ENCODE measurements at regions of chr17 and their contacts with region 1.

Region 1: GRCh38 chr17:7383742-7384488 is 3.0 kb downstream of the TNK1 start:
- DNase-seq: peak; percentile 86
- ATAC-seq: peak; percentile 97
- H3K4me3 Mint-ChIP-seq: peak overlapping the region; percentile 76
- H3K27ac Mint-ChIP-seq: peak overlapping the region; percentile 63
- H3K4me1 Mint-ChIP-seq: peaks cover 11% of the 10 kb centered on the region
- H3K27me3 Mint-ChIP-seq: peaks cover 31% of the 10 kb centered on the region

Region 2: DNA sequence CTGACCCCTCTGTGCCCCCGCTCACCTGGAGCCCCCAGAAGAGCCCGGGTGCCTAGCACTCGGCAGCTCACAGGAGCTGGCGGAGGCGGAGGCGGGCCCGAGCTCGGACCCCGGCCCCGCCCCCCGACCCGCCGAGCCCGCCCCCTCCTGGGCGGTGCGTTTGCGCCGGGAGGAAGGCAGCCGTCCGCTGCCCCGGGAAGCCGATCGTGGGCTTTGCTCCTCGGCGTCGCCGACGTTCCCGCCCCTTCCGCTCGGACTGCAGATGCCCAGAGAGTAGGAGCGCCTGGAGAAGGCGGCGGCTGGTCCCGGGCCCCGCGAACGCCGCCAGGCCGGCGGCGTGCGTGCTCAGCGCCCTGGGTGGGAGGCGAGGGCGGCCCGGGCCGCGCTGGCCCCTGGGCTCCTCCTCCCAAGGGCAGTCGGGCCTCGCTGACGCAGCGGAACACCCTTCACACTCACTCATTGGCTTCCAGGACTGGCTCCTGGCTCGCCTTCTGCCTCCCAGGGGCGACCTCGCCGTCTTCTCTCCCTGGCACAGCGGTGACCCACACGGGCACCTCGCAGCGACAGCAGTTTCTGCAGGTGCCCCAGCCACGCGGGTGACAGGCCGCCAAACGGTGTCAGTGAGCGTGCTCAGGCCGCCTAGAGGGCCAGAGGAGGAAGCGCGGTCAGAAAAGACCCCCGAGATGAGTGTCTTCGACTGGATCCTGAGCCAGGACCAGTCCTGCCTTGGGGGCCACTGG is 10.7 kb after region 1 on chr17 and contains the start of gene PLSCR3:
- POLR2A ChIA-PET with region 1: interaction called, 19 read pairs
- DNase-seq: peak; percentile 94
- ATAC-seq: peak; percentile 88
- H3K4me3 Mint-ChIP-seq: peak within 1 kb of the TSS; percentile 95
- H3K27ac Mint-ChIP-seq: peak within 1 kb of the TSS; percentile 89
- H3K4me1 Mint-ChIP-seq: peaks cover 19% of the 10 kb centered on the region
- H3K27me3 Mint-ChIP-seq: no peaks in the 10 kb centered on the region
- total RNA-seq, gene PLSCR3: 79.3 to 82.1 TPM

Region 3: DNA sequence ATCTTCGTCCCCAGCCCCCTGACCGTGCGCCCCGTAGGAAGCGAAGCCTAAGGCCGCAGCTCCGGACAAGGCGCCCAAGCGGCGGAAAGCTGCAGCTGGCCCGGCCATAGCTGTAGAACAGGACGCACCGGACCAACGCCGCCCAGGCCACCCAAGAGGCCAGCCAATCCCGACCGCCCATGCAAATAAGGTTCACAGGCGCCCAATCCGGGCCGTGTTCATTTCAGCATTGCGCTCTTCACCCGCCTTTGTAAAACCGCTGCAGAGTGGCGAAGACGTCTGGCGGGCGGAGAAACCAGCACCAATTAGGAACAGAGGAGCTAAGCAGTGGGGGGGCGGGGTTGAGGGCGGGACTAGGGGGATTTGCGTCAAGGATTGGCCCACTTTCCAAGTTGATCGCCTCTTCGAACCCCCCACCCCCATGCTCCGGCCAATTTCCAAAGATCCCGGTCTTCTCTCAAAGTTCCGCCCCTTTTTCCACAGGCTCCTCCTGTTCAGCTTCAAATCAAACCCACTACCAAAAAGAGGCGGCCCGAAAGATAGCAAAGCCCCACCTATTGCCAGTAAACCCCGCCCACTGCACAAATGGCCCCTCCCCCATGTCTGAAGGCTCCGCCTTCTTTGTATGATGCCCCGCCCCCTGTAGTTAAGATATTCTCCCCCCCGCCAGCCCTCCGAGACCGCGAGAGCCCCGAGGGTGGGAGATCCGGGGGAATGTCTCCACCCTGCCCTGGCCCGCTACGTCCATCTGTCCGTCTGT is 20.2 kb after region 1 on chr17 and contains the start of gene TMEM256:
- POLR2A ChIA-PET with region 1: interaction called, 10 read pairs
- DNase-seq: peak; percentile 90
- ATAC-seq: peak; percentile 95
- H3K4me3 Mint-ChIP-seq: peak within 1 kb of the TSS; percentile 92
- H3K27ac Mint-ChIP-seq: peak within 1 kb of the TSS; percentile 89
- H3K4me1 Mint-ChIP-seq: peaks cover 14% of the 10 kb centered on the region
- H3K27me3 Mint-ChIP-seq: peaks cover 11% of the 10 kb centered on the region
- total RNA-seq, gene TMEM256: 52.9 to 55.6 TPM

Region 4: GRCh38 chr17:7454980-7455379 is 71.1 kb after region 1 on chr17:
- POLR2A ChIA-PET with region 1: no interaction called
- DNase-seq: no peak
- ATAC-seq: no peak
- H3K4me3 Mint-ChIP-seq: peak overlapping the region; percentile 90
- H3K27ac Mint-ChIP-seq: peak overlapping the region; percentile 94
- H3K4me1 Mint-ChIP-seq: peaks cover 30% of the 10 kb centered on the region
- H3K27me3 Mint-ChIP-seq: no peaks in the 10 kb centered on the region

Measured in activated naive CD8-positive, alpha-beta T cell treated with anti-CD3 and anti-CD28 coated beads, Interleukin-2, amount 10 ng/mL, durations not matched to agents 7 days and 5 days (primary cell).